Astrocyte of the cerebellum (primary cell): ENCODE measurements at regions of chr1 and their contacts with region 1.

Region 1: DNA sequence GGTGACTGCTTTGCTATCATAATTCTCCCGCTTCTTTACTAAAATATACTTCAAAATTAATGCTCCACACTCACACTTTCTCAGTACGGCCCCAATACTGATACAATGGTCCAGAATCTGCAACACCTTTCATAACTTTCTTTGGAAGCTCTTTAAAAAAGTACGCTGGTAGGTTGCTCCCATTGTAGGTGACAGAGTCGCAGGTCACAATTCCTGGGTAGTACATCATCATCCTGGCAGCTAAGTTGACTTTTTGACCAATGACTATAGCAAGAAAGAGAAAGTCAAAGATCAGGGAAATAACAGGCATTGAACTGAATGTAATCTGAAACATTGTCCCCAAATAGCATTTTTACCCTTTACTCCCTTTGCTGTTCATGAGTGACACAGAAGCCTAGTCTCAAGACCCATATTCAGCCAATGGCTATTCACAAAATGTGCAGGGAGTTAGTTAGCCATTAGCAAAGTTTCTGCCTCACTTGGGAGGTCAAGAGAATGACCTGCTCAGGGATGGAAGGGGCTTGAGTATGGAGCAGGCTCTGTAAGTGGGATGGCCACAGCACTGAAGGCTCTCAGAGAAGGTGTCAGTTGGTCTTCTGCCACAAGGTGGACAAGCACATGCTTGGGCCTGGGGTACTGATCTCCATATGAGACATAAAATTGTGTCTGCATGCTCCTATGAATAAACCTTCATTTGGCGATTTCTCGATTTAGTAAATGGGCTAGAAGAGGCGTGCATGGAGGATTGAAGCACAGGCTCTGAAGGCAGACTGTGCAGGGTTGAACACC is 35.4 kb downstream of the ADCY10 start:
- DNase-seq: no peak
- H3K4me3 ChIP-seq: no peak overlapping the region
- CTCF ChIP-seq: no peak

Region 2: GRCh38 chr1:167837326-167837725 is 41.2 kb before region 1 on chr1:
- in situ Hi-C with region 1: no loop called
- DNase-seq: no peak
- H3K4me3 ChIP-seq: no peak overlapping the region
- CTCF ChIP-seq: no peak

Region 3: DNA sequence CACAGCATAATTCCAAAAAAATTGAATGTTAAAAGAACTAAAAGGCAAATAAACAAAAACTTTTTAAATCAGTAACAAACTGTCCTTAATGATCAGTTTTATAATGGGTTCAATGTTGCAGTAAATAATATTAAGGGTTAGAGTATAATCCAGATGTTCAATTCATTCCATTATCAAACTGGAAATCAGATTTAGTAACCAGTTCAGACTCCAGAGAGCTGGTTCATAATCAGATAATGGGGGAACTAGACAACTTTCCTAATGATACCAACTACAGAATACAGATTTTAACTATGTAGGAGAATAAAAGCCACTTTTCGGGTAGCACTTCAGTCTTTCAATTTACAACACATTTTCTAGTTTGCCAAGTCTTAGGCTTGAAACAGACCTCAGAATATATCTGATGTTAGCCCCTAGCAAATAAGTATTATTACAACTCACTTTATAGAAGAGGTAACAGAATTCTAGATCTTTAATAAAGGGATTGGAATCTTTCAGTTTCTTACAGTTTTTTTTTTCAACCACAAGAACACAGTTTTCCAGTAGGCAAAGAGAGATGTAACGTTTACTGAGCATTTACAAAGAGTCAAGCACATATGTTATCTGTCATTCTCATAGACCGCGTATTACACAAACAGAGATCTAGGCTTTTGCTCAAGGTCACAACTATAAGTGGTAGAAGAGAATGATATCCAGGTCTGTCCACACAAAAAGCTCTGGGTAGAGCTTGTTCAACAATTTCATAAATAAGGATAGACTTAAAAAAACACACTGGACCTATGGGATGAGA is 56.1 kb after region 1 on chr1:
- in situ Hi-C with region 1: loop called (anchors 5 kb)
- DNase-seq: no peak
- H3K4me3 ChIP-seq: peak overlapping the region; percentile 79
- CTCF ChIP-seq: no peak